ENCODE measurements at regions of chr17 and their contacts with region 1.

Region 1: DNA sequence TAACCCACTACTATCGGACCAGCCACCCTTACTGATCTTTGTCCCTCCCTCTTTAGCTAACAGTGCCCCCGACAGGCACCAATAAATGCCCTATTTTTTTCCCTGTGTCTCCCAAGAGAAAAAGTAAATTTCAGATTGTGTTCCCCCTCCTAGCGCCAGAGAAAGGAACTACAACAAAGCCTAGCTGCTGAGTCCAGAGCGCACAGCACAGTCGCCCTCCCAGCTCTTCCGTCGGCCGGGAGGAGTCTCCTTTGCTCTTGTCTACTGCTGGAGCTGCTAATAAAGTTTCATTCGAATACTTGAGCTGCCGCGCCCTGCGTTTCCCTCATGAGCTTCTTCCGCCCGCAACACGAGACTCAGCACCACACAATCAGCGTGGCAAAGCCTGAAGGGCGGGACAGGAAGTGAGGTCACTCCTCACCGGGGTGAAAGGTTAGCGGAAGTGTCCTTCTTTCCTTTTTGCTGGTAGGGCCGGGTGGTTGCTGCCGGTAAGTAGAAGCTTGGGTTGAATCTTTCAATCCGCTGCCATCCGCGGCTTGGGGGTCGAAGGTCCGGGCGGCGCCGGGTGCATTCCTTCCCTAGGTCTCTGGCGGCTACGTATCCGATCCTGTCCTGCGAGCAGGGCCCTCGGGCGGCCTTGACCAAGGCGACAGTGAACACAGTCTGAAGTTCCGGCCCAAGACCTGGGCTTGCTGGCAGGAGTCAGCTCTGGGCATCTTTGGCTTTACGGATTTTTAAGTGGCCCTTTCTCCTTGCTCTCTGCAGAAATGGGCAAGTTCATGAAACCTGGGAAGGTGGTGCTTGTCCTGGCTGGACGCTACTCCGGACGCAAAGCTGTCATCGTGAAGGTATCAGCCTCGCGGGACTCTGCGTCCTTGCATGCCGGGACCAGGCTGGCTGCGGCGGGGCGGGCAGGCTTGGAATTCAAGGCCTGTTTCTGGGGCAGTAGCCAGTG is at the start of gene RPL27:
- DNase-seq: peak; percentile 98
- H3K4me3 Mint-ChIP-seq: peak within 1 kb of the TSS; percentile 94
- H3K27ac Mint-ChIP-seq: peak within 1 kb of the TSS; percentile 96
- H3K4me1 Mint-ChIP-seq: peaks cover 35% of the 10 kb centered on the region
- H3K27me3 Mint-ChIP-seq: no peaks in the 10 kb centered on the region
- total RNA-seq, gene RPL27: 880 to 892 TPM

Region 2: DNA sequence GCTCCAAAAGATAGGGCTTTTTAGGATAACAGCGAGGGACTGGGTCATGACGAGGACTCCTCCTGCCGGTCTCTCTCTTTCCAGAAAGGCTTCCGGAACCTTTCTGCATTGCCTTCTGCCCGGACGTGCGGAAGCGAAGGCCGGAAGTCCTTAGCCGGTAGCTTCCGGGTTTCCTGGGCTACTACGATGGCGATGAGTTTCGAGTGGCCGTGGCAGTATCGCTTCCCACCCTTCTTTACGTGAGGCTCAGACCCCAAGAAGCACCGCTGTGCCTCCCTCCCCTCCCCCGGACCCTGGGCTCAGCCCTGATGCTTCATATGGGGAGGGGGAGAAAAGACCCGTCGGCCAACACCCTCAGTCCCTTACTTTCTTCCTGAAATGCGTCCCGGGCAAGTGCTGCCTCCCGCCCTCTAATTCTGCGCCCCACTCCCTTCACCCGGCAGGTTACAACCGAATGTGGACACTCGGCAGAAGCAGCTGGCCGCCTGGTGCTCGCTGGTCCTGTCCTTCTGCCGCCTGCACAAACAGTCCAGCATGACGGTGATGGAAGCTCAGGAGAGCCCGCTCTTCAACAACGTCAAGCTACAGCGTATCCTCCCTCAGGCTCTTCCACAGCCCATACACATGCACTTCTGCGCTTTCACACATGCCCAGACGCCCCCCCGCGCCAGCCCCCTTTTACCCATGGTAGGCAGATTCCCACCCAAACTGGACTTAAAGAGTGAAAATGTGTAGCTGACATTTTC is 224.8 kb before region 1 on chr17 and contains the start of gene VPS25:
- CTCF ChIA-PET with region 1: no interaction called
- POLR2A ChIA-PET with region 1: interaction called, 13 read pairs
- DNase-seq: peak; percentile 79
- H3K4me3 Mint-ChIP-seq: peak within 1 kb of the TSS; percentile 99
- H3K27ac Mint-ChIP-seq: peak within 1 kb of the TSS; percentile 89
- H3K4me1 Mint-ChIP-seq: peaks cover 38% of the 10 kb centered on the region
- H3K27me3 Mint-ChIP-seq: peaks cover 2% of the 10 kb centered on the region
- total RNA-seq, gene VPS25: 52.8 to 53.0 TPM

Region 3: GRCh38 chr17:42866631-42867575 is 131.4 kb before region 1 on chr17:
- CTCF ChIA-PET with region 1: no interaction called
- POLR2A ChIA-PET with region 1: no interaction called
- DNase-seq: no peak
- H3K4me3 Mint-ChIP-seq: no peak overlapping the region
- H3K27ac Mint-ChIP-seq: no peak overlapping the region
- H3K4me1 Mint-ChIP-seq: no peaks in the 10 kb centered on the region
- H3K27me3 Mint-ChIP-seq: peaks cover 22% of the 10 kb centered on the region

Region 4: DNA sequence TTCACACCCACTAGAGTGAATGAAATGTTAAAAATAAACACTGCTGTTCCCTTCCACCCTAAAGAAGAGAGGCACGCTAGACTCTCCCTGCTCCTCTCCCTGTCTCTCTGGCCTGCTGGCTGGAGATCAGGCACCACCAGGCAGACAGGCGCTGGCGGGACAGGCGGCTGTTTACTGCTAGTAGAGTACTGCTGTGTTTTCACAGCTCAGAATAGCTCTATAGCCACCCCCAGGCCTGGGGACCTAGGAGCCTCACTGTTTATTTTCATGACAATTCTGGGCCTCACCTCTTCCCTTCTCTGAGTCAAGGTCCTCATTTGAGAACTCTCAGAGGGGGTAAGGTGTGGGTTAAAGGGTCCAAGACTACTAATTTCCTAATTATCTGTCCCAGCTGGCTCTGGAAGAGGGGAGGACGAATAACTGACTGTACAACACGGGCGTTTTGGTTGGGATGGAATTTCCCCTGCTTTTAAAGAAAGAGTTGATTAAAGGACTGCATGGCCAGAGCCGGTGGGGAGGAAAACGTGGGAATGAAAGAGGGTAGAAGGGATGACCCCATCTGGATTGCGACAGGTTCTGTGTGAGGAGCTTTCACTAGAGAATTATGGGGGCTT is 106.6 kb before region 1 on chr17:
- CTCF ChIA-PET with region 1: no interaction called
- POLR2A ChIA-PET with region 1: no interaction called
- DNase-seq: no peak
- H3K4me3 Mint-ChIP-seq: no peak overlapping the region
- H3K27ac Mint-ChIP-seq: no peak overlapping the region
- H3K4me1 Mint-ChIP-seq: peaks cover 3% of the 10 kb centered on the region
- H3K27me3 Mint-ChIP-seq: peaks cover 23% of the 10 kb centered on the region

Region 5: DNA sequence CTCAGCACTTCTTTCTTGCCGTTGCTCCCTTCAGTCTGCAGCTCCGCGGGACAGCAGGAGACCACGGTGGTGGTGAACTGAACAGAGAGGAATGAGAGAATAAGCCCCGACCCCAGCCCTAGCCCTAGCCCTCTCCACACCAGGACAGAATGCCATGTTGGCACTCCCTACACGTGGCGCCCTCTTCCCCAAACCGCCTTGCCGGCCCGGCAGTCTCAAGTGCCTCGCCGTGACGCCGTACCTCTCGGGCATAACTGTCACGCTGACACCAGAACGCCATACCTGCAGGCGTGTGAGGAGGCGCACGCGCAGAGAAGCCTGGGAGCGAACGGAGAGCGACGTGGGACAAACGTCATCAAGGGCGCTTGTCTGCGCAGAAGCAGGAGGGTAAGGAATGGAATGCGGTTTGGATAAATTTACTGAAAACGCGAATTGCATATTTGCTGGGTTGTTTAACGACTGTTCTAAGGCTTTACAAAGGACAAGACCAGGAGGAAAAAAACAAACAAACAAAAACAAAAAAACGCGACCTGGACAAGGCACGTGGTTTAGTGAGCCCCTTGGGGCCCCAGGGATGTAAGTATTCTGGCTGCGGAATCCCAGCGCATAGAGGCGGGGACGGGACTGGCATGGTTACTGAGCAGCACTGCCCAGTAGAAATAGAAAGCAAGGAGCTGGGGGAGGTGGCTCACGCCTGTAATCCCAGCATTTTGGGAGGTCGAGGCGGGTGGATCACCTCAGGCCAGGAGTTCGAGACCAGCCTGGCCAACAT is 33.9 kb before region 1 on chr17 and contains the start of gene AARSD1:
- CTCF ChIA-PET with region 1: interaction called, 8 read pairs
- POLR2A ChIA-PET with region 1: interaction called, 11 read pairs
- DNase-seq: peak; percentile 92
- H3K4me3 Mint-ChIP-seq: peak within 1 kb of the TSS; percentile 87
- H3K27ac Mint-ChIP-seq: peak within 1 kb of the TSS; percentile 82
- H3K4me1 Mint-ChIP-seq: peaks cover 22% of the 10 kb centered on the region
- H3K27me3 Mint-ChIP-seq: no peaks in the 10 kb centered on the region
- total RNA-seq, gene AARSD1: 27.9 to 28.5 TPM

Region 6: DNA sequence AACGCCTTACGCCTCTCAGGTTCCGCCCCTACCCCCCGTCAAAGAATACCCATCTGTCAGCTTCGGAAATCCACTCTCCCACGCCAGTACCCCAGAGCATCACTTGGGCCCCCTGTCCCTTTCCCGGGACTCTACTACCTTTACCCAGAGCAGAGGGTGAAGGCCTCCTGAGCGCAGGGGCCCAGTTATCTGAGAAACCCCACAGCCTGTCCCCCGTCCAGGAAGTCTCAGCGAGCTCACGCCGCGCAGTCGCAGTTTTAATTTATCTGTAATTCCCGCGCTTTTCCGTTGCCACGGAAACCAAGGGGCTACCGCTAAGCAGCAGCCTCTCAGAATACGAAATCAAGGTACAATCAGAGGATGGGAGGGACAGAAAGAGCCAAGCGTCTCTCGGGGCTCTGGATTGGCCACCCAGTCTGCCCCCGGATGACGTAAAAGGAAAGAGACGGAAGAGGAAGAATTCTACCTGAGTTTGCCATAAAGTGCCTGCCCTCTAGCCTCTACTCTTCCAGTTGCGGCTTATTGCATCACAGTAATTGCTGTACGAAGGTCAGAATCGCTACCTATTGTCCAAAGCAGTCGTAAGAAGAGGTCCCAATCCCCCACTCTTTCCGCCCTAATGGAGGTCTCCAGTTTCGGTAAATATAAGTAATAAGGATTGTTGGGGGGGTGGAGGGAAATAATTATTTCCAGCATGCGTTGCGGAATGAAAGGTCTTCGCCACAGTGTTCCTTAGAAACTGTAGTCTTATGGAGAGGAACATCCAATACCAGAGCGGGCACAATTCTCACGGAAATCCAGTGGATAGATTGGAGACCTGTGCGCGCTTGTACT is 127.1 kb after region 1 on chr17 and contains the start of gene BRCA1:
- CTCF ChIA-PET with region 1: no interaction called
- POLR2A ChIA-PET with region 1: interaction called, 14 read pairs
- DNase-seq: peak; percentile 96
- H3K4me3 Mint-ChIP-seq: peak within 1 kb of the TSS; percentile 100
- H3K27ac Mint-ChIP-seq: peak within 1 kb of the TSS; percentile 91
- H3K4me1 Mint-ChIP-seq: peaks cover 38% of the 10 kb centered on the region
- H3K27me3 Mint-ChIP-seq: no peaks in the 10 kb centered on the region
- total RNA-seq, gene BRCA1: 62.5 to 66.5 TPM

Region 7: GRCh38 chr17:43316522-43317142 is 318.4 kb after region 1 on chr17:
- CTCF ChIA-PET with region 1: no interaction called
- POLR2A ChIA-PET with region 1: interaction called, 34 read pairs
- DNase-seq: peak; percentile 43
- H3K4me3 Mint-ChIP-seq: no peak overlapping the region
- H3K27ac Mint-ChIP-seq: peak overlapping the region; percentile 61
- H3K4me1 Mint-ChIP-seq: peaks cover 17% of the 10 kb centered on the region
- H3K27me3 Mint-ChIP-seq: no peaks in the 10 kb centered on the region

Measured in activated CD4-positive, alpha-beta memory T cell treated with anti-CD3 and anti-CD28 coated beads, Interleukin-2, amount 10 ng/mL, durations not matched to agents 7 days and 5 days (primary cell).